ENCODE measurements at regions of chr20 and their contacts with region 1.

Region 1: DNA sequence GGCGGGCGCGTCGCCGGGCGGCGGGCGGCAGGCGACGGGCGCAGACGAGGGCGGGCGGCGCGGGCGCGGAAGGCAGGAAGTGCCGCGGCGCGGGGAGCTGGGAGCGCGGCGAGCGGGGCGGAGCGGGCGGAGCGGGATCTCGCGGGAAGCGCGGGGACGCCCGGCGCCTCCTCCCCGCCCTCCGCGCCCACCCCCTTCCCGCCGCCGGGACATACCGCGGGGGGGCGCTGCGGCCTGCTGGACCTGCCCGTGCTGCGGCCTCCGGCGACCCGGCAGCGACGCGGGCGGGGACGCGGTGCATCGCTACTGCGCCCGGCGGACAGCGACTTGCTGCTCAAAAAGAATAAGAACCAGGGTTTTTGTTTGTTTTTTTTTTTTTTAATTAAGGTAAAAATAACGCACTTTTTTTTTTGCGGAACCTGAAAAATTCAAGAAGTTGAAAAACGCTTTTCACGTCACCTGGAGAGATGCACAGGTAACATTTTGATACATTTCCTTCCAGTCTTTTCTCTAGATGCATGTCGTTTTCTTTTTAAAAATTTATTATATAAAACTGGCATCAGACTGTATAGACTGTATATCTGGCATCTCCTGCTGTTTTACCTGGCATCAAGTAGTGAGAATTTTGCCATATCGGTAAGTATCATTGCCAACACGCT is at the start of gene CENPB:
- DNase-seq: peak; percentile 98
- H3K4me3 ChIP-seq: peak within 1 kb of the TSS; percentile 63 to 74
- H3K27ac ChIP-seq: peak within 1 kb of the TSS; percentile 41 to 82
- H3K4me1 ChIP-seq: peaks cover 26 to 27% of the 10 kb centered on the region in 2 experiments; a peak in 3 of 4 replicates
- H3K27me3 ChIP-seq: no peaks in the 10 kb centered on the region
- CTCF ChIP-seq: peak; percentile 70
- EP300 ChIP-seq: no peak
- RAD21 ChIP-seq: peak; percentile 77
- polyA plus RNA-seq, gene CENPB: 37.6 and 41.2 TPM in 2 replicates

Region 2: GRCh38 chr20:3652676-3653596 is 133.9 kb before region 1 on chr20:
- CTCF ChIA-PET with region 1: no interaction called
- POLR2A ChIA-PET with region 1: no interaction called
- DNase-seq: no peak
- H3K4me3 ChIP-seq: no peak overlapping the region
- H3K27ac ChIP-seq: no peak overlapping the region; a peak in 1 of 4 replicates
- H3K4me1 ChIP-seq: peaks cover 0 to 32% of the 10 kb centered on the region in 2 experiments; a peak in 1 of 4 replicates
- H3K27me3 ChIP-seq: no peaks in the 10 kb centered on the region
- CTCF ChIP-seq: no peak
- EP300 ChIP-seq: no peak
- RAD21 ChIP-seq: no peak

Region 3: DNA sequence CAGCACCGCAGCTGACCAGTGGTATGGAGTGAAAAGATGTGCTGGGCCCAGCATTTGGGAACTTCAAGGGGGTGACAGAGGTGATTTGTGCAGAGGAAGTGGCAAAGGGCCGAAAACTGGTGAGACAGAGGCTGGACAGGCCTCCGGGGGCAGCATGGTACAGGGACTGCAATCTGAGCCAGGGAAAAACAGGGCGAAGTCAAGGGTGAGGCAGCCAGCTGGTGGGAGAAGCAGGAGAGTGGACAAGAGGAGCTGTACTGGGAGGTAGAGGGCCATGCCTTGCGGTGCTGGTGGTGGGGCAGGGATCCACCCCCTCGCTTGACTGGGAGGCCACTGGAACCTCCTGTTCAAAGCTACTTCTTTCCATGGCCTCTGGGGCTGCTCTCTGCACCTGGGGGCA is 116.3 kb before region 1 on chr20:
- CTCF ChIA-PET with region 1: interaction called, 10 read pairs
- POLR2A ChIA-PET with region 1: no interaction called
- DNase-seq: peak; percentile 57
- H3K4me3 ChIP-seq: no peak overlapping the region
- H3K27ac ChIP-seq: no peak overlapping the region
- H3K4me1 ChIP-seq: peaks cover 0 to 7% of the 10 kb centered on the region in 2 experiments; a peak in 1 of 4 replicates
- H3K27me3 ChIP-seq: peaks cover 39% of the 10 kb centered on the region
- CTCF ChIP-seq: peak; percentile 49
- EP300 ChIP-seq: no peak
- RAD21 ChIP-seq: no peak

Region 4: GRCh38 chr20:3753098-3753980 is 33.5 kb before region 1 on chr20:
- CTCF ChIA-PET with region 1: interaction called, 15 read pairs
- POLR2A ChIA-PET with region 1: no interaction called
- DNase-seq: peak; percentile 82
- H3K4me3 ChIP-seq: no peak overlapping the region
- H3K27ac ChIP-seq: no peak overlapping the region
- H3K4me1 ChIP-seq: peaks cover 0 to 6% of the 10 kb centered on the region in 2 experiments; a peak in 1 of 4 replicates
- H3K27me3 ChIP-seq: no peaks in the 10 kb centered on the region
- CTCF ChIP-seq: peak; percentile 77
- EP300 ChIP-seq: no peak
- RAD21 ChIP-seq: peak; percentile 72

Region 5: GRCh38 chr20:3767427-3768341 is 19.1 kb before region 1 on chr20 and contains the start of gene ADISSP:
- CTCF ChIA-PET with region 1: interaction called, 27 read pairs
- POLR2A ChIA-PET with region 1: interaction called, 11 read pairs
- DNase-seq: peak; percentile 99
- H3K4me3 ChIP-seq: peak within 1 kb of the TSS; percentile 83 to 93
- H3K27ac ChIP-seq: peak within 1 kb of the TSS; percentile 94 to 95
- H3K4me1 ChIP-seq: peaks cover 9 to 22% of the 10 kb centered on the region in 2 experiments; a peak in 3 of 4 replicates
- H3K27me3 ChIP-seq: no peaks in the 10 kb centered on the region
- CTCF ChIP-seq: peak; percentile 28
- EP300 ChIP-seq: no peak
- RAD21 ChIP-seq: no peak
- polyA plus RNA-seq, gene ADISSP: 59.9 and 73.9 TPM in 2 replicates

Region 6: GRCh38 chr20:3811467-3812258 is 24.9 kb after region 1 on chr20:
- CTCF ChIA-PET with region 1: interaction called, 61 read pairs
- POLR2A ChIA-PET with region 1: interaction called, 4 read pairs
- DNase-seq: peak; percentile 93
- H3K4me3 ChIP-seq: peak overlapping the region; percentile 41 to 56
- H3K27ac ChIP-seq: peak overlapping the region; percentile 97 to 98
- H3K4me1 ChIP-seq: peaks cover 26 to 37% of the 10 kb centered on the region in 2 experiments
- H3K27me3 ChIP-seq: no peaks in the 10 kb centered on the region
- CTCF ChIP-seq: no peak
- EP300 ChIP-seq: peak; percentile 92 to 98
- RAD21 ChIP-seq: no peak

Region 7: GRCh38 chr20:3820048-3820900 is 33.5 kb after region 1 on chr20 and contains the start of gene AP5S1:
- CTCF ChIA-PET with region 1: interaction called, 161 read pairs
- POLR2A ChIA-PET with region 1: interaction called, 20 read pairs
- DNase-seq: peak; percentile 93
- H3K4me3 ChIP-seq: peak within 1 kb of the TSS; percentile 80 to 84
- H3K27ac ChIP-seq: peak within 1 kb of the TSS; percentile 92 to 97
- H3K4me1 ChIP-seq: peaks cover 11 to 23% of the 10 kb centered on the region in 2 experiments; a peak in 2 of 4 replicates
- H3K27me3 ChIP-seq: no peaks in the 10 kb centered on the region
- CTCF ChIP-seq: peak; percentile 98
- EP300 ChIP-seq: 0 out of 4 replicates have a peak, but pooled peaks of 1 of the 2 experiments have one; percentile 3
- RAD21 ChIP-seq: peak; percentile 64
- polyA plus RNA-seq, gene AP5S1: 8.6 and 10.3 TPM in 2 replicates

Region 8: GRCh38 chr20:3854462-3854871 is 67.7 kb after region 1 on chr20:
- CTCF ChIA-PET with region 1: interaction called, 42 read pairs
- POLR2A ChIA-PET with region 1: no interaction called
- DNase-seq: no peak
- H3K4me3 ChIP-seq: no peak overlapping the region
- H3K27ac ChIP-seq: no peak overlapping the region
- H3K4me1 ChIP-seq: no peaks in the 10 kb centered on the region
- H3K27me3 ChIP-seq: no peaks in the 10 kb centered on the region
- CTCF ChIP-seq: no peak
- EP300 ChIP-seq: no peak
- RAD21 ChIP-seq: no peak

Measured in SK-N-SH (cell line).